A673 (cell line): ENCODE measurements at regions of chr19 and their contacts with region 1.

Region 1: DNA sequence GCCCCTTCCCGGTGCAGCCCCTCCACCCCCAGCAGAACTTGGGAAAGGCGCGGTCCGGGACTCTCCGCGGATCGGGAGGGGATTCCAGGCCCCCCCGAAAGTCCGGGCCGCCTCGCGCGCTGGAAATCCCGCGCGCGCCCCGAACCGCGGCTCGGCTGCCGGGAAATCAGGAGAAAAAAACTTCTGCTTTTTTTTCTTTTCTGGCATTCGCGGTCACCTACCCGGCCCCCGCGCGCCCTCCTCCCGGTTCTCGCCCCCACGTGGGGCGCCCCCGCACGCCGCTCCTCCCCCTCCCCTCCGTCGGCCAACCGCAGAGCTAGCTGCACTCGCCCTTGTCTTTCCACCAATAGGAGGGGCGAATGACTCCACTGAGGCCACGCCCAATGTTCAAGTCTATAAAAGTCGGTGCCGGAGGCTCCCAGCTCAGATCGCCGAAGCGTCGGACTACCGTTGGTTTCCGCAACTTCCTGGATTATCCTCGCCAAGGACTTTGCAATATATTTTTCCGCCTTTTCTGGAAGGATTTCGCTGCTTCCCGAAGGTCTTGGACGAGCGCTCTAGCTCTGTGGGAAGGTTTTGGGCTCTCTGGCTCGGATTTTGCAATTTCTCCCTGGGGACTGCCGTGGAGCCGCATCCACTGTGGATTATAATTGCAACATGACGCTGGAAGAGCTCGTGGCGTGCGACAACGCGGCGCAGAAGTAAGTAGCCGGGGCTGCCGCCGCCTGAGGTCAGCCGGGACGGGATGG is at the start of gene GADD45B:
- DNase-seq: peak; percentile 98
- H3K4me3 ChIP-seq: peak within 1 kb of the TSS; percentile 81
- H3K27ac ChIP-seq: peak within 1 kb of the TSS; percentile 65
- H3K4me1 ChIP-seq: peaks cover 33% of the 10 kb centered on the region
- H3K27me3 ChIP-seq: no peaks in the 10 kb centered on the region
- CTCF ChIP-seq: no peak
- total RNA-seq, gene GADD45B: 12.3 and 16.4 TPM in 2 replicates

Region 2: GRCh38 chr19:2154587-2155075 is 321.2 kb before region 1 on chr19:
- CTCF ChIA-PET with region 1: no interaction called
- POLR2A ChIA-PET with region 1: no interaction called
- intact Hi-C with region 1: no loop called
- DNase-seq: no peak
- H3K4me3 ChIP-seq: no peak overlapping the region
- H3K27ac ChIP-seq: no peak overlapping the region
- H3K4me1 ChIP-seq: peaks cover 6% of the 10 kb centered on the region
- H3K27me3 ChIP-seq: no peaks in the 10 kb centered on the region
- CTCF ChIP-seq: no peak

Region 3: GRCh38 chr19:2457394-2458037 is 18.4 kb before region 1 on chr19:
- CTCF ChIA-PET with region 1: interaction called, 5 read pairs
- POLR2A ChIA-PET with region 1: interaction called, 13 read pairs
- intact Hi-C with region 1: no loop called
- DNase-seq: no peak
- H3K4me3 ChIP-seq: peak overlapping the region; percentile 100
- H3K27ac ChIP-seq: peak overlapping the region; percentile 75
- H3K4me1 ChIP-seq: peaks cover 25% of the 10 kb centered on the region
- H3K27me3 ChIP-seq: no peaks in the 10 kb centered on the region
- CTCF ChIP-seq: no peak

Region 4: GRCh38 chr19:2543463-2544442 is 67.9 kb after region 1 on chr19:
- CTCF ChIA-PET with region 1: no interaction called
- POLR2A ChIA-PET with region 1: interaction called, 6 read pairs
- intact Hi-C with region 1: loop called (anchors 5 kb)
- DNase-seq: peak; percentile 98
- H3K4me3 ChIP-seq: no peak overlapping the region
- H3K27ac ChIP-seq: peak overlapping the region; percentile 88
- H3K4me1 ChIP-seq: peaks cover 29% of the 10 kb centered on the region
- H3K27me3 ChIP-seq: no peaks in the 10 kb centered on the region
- CTCF ChIP-seq: peak; percentile 37; the same call in 1 of the 2 replicates

Region 5: DNA sequence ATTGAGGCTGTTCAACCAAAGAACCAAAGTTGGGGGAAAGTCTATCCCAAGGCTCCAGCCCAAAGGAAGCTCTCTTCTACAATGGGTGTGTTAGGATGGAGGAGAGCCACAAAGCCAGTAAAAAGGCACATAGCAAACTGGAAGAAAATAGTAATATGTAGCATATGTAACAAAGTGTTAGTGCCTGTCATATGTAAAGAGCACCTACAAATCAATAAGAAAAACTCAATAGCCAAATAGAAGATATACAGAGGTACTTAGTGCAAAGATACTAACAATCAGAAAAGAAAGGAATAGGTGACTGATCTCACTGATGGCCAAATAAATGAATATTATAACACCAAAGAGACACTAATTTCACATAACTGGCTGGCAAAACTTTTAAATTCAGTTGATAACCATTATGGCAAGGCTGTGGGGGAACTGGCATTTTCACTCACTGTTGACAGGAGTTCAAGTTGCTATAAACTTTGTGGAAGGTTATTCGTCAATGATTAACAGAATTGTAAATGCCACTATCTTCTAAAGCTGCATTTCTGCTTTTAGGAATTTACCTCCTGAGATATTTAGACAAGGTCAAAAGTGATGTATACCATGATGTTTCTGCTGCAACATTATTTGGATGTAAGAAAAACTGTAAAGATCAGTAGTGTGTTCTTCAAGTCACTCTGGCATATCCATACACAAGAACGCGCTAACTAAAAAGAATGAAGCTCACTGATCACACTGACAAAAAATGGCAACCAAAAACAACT is 115.8 kb after region 1 on chr19:
- CTCF ChIA-PET with region 1: no interaction called
- POLR2A ChIA-PET with region 1: interaction called, 12 read pairs
- intact Hi-C with region 1: no loop called
- DNase-seq: no peak
- H3K4me3 ChIP-seq: no peak overlapping the region
- H3K27ac ChIP-seq: no peak overlapping the region
- H3K4me1 ChIP-seq: no peaks in the 10 kb centered on the region
- H3K27me3 ChIP-seq: no peaks in the 10 kb centered on the region
- CTCF ChIP-seq: no peak

Region 6: GRCh38 chr19:2610637-2611482 is 135.0 kb after region 1 on chr19:
- CTCF ChIA-PET with region 1: interaction called, 23 read pairs
- POLR2A ChIA-PET with region 1: interaction called, 14 read pairs
- intact Hi-C with region 1: loop called (anchors 1 kb)
- DNase-seq: peak; percentile 88
- H3K4me3 ChIP-seq: peak overlapping the region; percentile 38
- H3K27ac ChIP-seq: no peak overlapping the region
- H3K4me1 ChIP-seq: no peaks in the 10 kb centered on the region
- H3K27me3 ChIP-seq: no peaks in the 10 kb centered on the region
- CTCF ChIP-seq: peak; percentile 95